Stomach (tissue), 19 donors: ENCODE measurements at regions of chr4 and their contacts with region 1.

Region 1: GRCh38 chr4:52712172-52712990 is 38.8 kb downstream of the ERVMER34-1 start:
- DNase-seq: peak; percentile 99
- H3K4me3 ChIP-seq: peak overlapping the region; percentile 71 to 96 (median 84)
- H3K27ac ChIP-seq: peak overlapping the region; percentile 95 to 99 (median 98)
- H3K4me1 ChIP-seq: peaks cover 23 to 45% (median 37%) of the 10 kb centered on the region in 4 donors
- H3K27me3 ChIP-seq: no peaks in the 10 kb centered on the region
- CTCF ChIP-seq: no peak
- EP300 ChIP-seq: no peak
- POLR2A ChIP-seq: peak in 2 of 4 donors; percentile 59 to 75

Region 2: GRCh38 chr4:52659722-52660261 is 52.6 kb before region 1 on chr4:
- intact Hi-C with region 1: loop called (anchors 10 kb)
- DNase-seq: peak; percentile 71 to 75
- H3K4me3 ChIP-seq: peak overlapping the region; percentile 79 to 92 (median 88)
- H3K27ac ChIP-seq: peak overlapping the region; percentile 92 to 99 (median 98)
- H3K4me1 ChIP-seq: peaks cover 23 to 48% (median 42%) of the 10 kb centered on the region in 4 donors
- H3K27me3 ChIP-seq: no peaks in the 10 kb centered on the region
- CTCF ChIP-seq: no peak
- EP300 ChIP-seq: no peak
- POLR2A ChIP-seq: no peak